ENCODE measurements at regions of chr7 and their contacts with region 1.

Region 1: GRCh38 chr7:152424348-152425108 is 11.3 kb downstream of the KMT2C start:
- DNase-seq: no peak
- H3K4me3 Mint-ChIP-seq: no peak overlapping the region
- H3K27ac Mint-ChIP-seq: peak overlapping the region; percentile 51
- H3K4me1 Mint-ChIP-seq: peaks cover 39% of the 10 kb centered on the region
- H3K27me3 Mint-ChIP-seq: no peaks in the 10 kb centered on the region

Region 2: DNA sequence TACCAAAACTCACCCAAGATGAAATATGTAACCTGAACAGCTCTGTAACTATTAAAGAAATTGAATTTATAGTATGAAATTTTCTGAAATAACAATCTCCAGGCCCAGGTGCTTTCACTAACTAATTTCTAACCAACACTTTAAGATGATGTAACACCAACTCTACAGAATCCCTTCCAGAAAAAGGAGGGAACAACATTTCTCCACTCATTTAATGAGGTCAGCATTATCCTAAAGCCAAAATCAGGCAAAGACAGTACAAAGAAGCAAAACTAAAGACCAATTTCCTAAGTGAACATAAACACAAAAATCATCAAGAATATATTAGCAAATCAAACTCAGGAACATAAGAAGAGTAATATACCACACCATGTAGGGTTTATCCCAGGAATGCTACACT is 54.2 kb before region 1 on chr7:
- intact Hi-C with region 1: loop called (anchors 10 kb)
- DNase-seq: no peak
- H3K4me3 Mint-ChIP-seq: no peak overlapping the region
- H3K27ac Mint-ChIP-seq: no peak overlapping the region
- H3K4me1 Mint-ChIP-seq: peaks cover 10% of the 10 kb centered on the region
- H3K27me3 Mint-ChIP-seq: no peaks in the 10 kb centered on the region